ENCODE measurements at regions of chr11 and their contacts with region 1.

Region 1: DNA sequence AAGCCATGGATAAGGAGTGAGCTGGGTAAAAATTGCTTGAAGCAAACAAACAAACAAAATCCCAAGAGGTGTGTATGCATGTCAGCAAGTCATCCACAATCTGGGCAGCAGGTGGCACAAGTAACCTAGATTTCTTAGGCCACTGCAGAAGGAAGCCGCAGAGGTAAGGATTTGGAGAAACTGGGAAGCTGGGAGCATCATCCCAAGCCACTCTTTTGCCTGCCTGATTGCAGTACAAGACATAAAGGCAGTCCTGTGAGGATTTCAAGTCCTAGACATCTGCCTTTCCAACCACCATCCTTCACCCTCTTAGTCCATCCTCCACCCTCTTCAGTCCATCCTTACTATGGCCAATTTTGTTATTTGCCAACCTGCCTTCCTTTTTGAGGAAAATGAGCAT is 67.2 kb upstream of the BMAL1 start:
- DNase-seq: peak; percentile 66

Region 2: DNA sequence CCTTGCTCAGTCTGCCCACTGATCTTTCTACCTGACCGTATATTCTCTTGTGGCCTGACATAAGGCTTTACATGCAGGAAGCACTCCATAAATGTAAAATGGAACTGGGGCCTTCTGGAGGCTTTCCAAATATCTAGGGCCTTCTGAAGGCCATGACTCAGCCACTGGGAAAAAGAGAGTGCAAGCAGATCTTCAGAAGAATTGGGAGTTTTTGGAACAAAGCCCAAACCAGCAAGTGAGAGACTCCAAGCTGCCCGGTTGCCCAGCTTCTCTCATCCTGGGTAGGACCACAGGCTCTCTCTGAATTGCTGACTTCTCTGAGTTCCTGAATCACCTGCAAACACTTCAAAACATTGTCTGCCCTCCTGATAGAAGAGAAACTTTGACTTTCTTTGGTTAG is 40.7 kb before region 1 on chr11:
- in situ Hi-C with region 1: no loop called
- DNase-seq: no peak

Region 3: DNA sequence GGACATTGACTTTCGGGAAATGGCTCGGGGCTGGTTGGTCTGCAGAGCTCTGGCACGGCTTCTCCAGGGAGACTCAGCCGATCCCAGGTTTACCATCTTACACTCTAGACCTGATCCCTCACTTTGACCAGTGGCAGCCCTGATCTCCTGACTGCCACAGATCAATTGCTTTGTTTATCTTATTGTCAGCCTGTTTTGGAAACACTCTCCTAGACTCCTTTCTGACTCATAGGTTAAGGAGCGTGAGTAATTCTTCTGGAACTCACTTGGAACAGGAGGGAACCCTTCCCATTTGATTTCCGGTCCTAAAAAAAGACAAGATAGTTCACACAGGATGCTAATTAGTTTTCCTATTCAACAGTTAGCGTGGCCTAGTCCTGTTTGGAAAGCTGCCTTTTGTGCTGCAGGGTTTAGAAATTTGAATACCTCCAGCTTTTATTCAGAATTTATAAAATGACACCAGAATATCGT is 51.2 kb after region 1 on chr11:
- in situ Hi-C with region 1: loop called (anchors 10 kb)
- DNase-seq: peak; percentile 81

Measured in Caki2 (cell line).